ENCODE measurements at regions of chr2 and their contacts with region 1.

Region 1: DNA sequence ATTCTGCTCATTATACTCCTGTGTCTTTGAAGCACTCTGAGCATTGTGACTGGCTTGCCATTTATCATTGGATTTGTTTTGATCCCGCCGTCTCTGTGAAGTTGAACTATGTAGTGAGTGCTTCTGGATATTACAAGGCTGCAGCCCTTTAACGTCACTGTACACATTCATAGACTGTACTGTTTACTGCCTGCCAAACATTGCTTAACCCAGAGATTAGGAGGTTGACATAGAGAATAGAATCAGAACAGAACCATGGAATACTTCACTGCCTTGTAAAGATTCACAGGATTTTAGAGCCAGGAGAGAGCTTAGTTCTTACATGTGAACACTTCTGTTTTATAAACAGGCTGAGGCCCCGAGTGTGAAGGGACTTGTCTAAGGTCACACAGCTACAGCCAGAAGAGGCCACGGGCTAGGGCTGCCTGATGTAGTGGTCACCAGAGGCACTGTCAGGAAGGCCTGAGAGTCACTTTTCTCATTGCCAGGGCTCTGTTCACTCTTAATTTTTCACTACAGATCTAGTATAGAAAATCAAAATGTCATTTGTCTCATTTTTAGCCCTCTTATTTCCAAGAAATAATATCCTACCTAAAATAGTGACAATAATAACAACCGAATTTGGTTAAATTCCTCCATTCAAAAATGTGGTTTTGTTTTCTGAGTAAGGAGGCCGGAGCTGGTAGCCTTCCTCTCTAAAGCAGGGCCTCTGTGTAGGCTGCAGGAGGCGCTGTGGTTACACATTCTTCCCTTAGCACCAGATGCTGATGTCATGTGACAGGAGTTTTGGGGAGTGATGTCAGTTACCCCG is 87.9 kb downstream of the UGGT1 start:
- DNase-seq: peak; percentile 82

Region 2: GRCh38 chr2:128232965-128233789 is 54.3 kb after region 1 on chr2:
- intact Hi-C with region 1: loop called (anchors 5 kb)
- DNase-seq: peak; percentile 96

Measured in cardiac septum (tissue), 1 donor.